ENCODE measurements at regions of chr7 and their contacts with region 1.

Region 1: DNA sequence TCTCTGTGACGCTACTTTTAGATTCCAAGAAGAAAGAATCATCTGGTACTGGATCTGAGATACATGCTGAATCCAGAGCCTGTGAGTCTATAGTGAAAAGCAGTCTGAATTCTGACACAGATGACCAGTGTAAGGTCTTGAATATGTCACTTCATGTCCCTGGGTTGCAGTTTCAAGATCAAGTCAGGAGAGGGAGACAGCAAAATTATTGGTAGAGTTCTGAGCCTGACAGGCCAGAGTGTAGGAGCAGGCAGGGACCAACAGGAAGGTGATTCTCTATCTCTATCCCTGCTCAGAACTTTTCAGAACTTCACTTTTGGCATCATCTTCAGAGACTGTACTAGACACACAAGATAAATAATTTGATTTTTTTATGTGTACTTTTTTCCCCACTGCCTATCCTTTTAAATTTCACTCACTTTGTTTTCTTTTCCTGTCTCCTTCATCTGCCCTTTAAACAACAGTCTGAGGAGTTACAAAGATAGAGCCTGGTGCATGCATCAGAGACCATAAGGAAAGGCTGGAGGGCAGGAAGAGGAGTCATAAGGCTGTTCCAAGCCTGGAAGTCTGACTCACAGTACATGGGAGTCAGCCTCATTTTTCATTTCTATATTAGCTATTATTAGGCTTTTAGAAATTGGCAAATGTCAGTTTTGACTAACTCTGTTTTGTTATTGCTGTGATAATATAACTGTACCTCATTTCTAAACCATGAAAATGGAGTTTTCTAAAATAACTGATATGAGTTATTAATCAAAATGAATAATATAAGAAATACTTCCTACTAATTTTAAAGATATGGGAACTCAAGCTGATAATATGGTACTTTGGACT is 120.2 kb upstream of the TMEM229A start:
- DNase-seq: peak; percentile 21
- H3K4me3 ChIP-seq: no peak overlapping the region
- H3K27ac ChIP-seq: no peak overlapping the region
- H3K27me3 ChIP-seq: no peaks in the 10 kb centered on the region
- CTCF ChIP-seq: peak; percentile 46

Region 2: GRCh38 chr7:124171068-124171467 is 18.0 kb after region 1 on chr7:
- CTCF ChIA-PET with region 1: interaction called, 30 read pairs
- POLR2A ChIA-PET with region 1: no interaction called
- DNase-seq: peak; percentile 37
- H3K4me3 ChIP-seq: no peak overlapping the region
- H3K27ac ChIP-seq: no peak overlapping the region
- H3K27me3 ChIP-seq: no peaks in the 10 kb centered on the region
- CTCF ChIP-seq: peak; percentile 77

Region 3: GRCh38 chr7:124777268-124777667 is 624.2 kb after region 1 on chr7:
- CTCF ChIA-PET with region 1: interaction called, 110 read pairs
- POLR2A ChIA-PET with region 1: no interaction called
- DNase-seq: no peak
- H3K4me3 ChIP-seq: no peak overlapping the region
- H3K27ac ChIP-seq: no peak overlapping the region
- H3K27me3 ChIP-seq: no peaks in the 10 kb centered on the region
- CTCF ChIP-seq: no peak

Region 4: GRCh38 chr7:124840435-124840834 is 687.4 kb after region 1 on chr7:
- CTCF ChIA-PET with region 1: interaction called, 13 read pairs
- POLR2A ChIA-PET with region 1: no interaction called
- DNase-seq: no peak
- H3K4me3 ChIP-seq: no peak overlapping the region
- H3K27ac ChIP-seq: no peak overlapping the region
- H3K27me3 ChIP-seq: no peaks in the 10 kb centered on the region
- CTCF ChIP-seq: peak; percentile 22; the same call in 1 of the 2 replicates

Measured in AG04450 (cell line).